Posterior cingulate gyrus (tissue), 11 donors: ENCODE measurements at regions of chr3 and their contacts with region 1.

Region 1: DNA sequence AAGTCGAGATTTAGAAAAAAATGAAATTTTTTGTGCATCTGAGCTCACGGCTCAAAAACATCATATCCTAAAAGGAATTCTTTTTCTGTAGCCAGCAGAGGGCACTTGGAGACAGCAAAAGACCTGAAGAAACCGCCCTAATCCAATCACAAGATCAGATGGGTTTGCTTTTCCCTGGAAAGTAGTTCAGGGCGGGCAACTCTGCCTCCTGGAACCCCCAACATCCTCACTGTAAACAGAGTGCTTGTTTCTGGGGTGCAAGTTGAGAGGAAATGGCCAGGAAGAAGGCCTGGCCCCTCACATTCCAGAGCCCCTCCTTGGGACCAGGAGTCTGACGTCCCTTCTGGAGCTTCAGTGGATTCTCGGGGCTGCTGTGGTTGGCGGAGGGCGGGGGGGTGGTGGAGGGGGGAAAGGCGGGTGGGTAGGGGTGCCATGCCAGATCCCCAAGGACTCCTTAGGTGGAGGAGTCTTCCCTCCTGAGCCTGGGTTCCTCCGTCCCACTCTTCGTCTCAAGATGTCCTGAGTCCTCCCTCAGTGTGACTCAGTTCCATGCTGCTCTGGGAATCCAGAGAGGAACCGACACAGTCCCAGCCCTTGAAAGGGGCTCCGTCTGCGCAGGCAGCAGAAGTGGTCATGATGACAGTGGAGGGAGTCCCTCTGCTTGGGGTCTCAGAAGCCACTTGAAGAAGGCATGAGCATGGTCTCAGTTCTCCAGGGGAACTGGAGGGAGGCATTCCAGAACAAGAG is 35.9 kb downstream of the CCK start:
- DNase-seq: peak in 1 of 10 donors; percentile 62

Region 2: DNA sequence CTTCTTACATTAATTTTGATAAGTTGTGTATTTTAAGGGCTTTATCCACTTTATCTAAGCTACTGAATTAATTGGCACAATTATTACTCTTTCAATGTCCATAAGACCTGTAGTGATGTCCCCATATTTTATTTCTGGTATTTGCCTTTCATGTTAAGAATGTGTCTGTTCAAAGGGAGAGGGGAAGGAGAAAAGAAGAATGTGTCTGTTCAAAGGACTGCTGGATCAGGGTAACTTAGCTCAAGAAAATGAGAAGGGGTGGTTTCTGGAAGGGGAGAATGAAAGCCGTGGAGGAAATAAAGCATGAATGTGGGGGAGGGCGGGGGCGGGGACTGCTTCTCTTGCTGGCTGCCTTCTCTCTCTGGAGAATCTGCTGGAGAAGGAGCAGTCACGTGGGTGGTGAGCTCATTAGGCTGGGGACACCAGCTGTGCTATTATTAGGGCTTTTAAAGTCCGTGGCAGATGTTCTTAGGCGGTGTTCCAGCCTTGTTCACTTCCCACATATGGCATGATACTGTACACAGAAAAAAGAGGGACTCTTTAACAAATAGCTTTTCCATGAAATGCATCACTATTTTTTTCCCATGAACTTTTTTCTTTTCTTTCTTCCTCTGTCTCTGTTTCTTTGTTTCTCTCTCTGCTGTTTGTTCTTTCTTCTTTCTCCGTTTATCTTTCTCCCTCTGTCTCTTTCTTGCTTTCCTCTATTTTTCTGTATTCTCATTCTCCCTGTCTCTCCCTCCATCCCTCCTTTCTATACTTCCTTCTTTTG is 204.6 kb before region 1 on chr3:
- intact Hi-C with region 1: no loop called
- DNase-seq: peak; percentile 72 to 97 (median 82)

Region 3: GRCh38 chr3:42118762-42119361 is 111.3 kb before region 1 on chr3:
- intact Hi-C with region 1: loop called (anchors 2 kb)
- DNase-seq: peak in 4 of 10 donors; percentile 40 to 88 (median 55)

Region 4: GRCh38 chr3:42547401-42547945 is 317.4 kb after region 1 on chr3:
- intact Hi-C with region 1: loop called (anchors 5 kb)
- DNase-seq: peak; percentile 53 to 97 (median 80)